Activated CD4-positive, alpha-beta memory T cell treated with anti-CD3 and anti-CD28 coated beads for 36 hours (primary cell): ENCODE measurements at regions of chr2 and their contacts with region 1.

Region 1: DNA sequence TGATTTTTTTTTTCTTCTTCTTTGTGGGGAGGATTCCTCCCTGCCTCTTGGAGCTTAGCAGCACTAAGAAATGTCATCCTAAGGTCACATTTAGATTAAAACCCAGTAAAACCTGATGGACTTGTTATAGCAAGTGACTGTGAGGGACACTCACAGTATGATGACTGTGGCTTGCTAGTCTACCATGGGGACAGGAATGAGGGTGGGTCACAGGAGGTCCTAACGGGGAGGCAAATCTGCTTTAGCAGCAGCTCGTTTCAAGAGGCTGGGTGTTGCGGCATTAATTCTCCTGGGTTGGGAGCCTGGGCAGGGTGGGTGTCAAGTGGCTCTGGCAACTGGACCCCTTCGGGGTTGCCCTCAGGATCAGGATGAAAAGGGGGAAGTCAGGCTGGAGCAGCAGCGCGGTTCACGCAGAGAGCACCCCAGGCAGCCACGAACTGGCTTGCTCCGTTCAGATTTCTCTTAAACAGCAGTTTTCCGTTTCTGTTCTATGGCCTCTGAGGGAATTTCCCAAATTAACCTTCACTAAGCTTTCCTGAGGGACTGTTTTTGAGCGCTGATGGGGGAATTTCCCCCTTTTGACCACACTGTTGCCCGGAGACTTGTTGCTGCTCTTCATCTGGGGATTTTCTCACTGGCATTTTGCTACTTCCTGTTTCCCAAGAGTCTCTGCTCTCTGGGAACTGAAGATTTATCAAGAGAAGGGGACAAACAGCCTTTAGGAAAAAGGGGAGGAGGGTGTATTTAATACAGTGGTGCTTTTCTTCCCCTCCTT is 59.8 kb upstream of the PELI1 start:
- DNase-seq: peak; percentile 69
- H3K4me3 Mint-ChIP-seq: peak overlapping the region; percentile 71
- H3K27ac Mint-ChIP-seq: peak overlapping the region; percentile 87
- H3K4me1 Mint-ChIP-seq: peaks cover 83% of the 10 kb centered on the region
- H3K27me3 Mint-ChIP-seq: no peaks in the 10 kb centered on the region

Region 2: GRCh38 chr2:63679252-63679855 is 524.7 kb before region 1 on chr2:
- CTCF ChIA-PET with region 1: no interaction called
- POLR2A ChIA-PET with region 1: no interaction called
- intact Hi-C with region 1: no loop called
- DNase-seq: no peak
- H3K4me3 Mint-ChIP-seq: no peak overlapping the region
- H3K27ac Mint-ChIP-seq: no peak overlapping the region
- H3K4me1 Mint-ChIP-seq: peaks cover 11% of the 10 kb centered on the region
- H3K27me3 Mint-ChIP-seq: peaks cover 5% of the 10 kb centered on the region

Region 3: DNA sequence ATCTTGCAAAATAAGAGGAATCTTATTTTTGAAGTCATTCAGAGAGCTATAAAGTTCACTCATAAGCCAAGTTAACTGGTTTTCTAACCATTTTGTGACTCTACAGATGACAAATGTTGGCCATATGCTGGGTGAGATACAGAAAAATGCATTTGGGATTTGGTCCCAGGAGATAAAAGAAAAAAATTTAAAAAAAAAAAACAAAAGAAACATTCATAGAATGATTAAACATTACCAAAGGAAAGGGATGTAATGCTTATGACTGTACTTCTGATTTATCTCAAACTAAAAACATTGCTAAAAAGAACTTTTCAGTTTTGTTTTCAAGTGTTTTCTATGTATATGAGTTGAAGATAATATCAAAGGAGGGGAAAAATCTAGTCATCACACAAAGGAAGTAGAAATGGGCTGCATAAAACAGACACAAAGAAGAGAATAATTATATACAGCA is 102.9 kb before region 1 on chr2:
- CTCF ChIA-PET with region 1: no interaction called
- POLR2A ChIA-PET with region 1: no interaction called
- intact Hi-C with region 1: loop called (anchors 2 kb)
- DNase-seq: no peak
- H3K4me3 Mint-ChIP-seq: peak overlapping the region; percentile 49
- H3K27ac Mint-ChIP-seq: peak overlapping the region; percentile 78
- H3K4me1 Mint-ChIP-seq: peaks cover 63% of the 10 kb centered on the region
- H3K27me3 Mint-ChIP-seq: no peaks in the 10 kb centered on the region

Region 4: GRCh38 chr2:64165706-64166105 is 38.3 kb before region 1 on chr2:
- CTCF ChIA-PET with region 1: interaction called, 3 read pairs
- POLR2A ChIA-PET with region 1: no interaction called
- intact Hi-C with region 1: loop called (anchors 2 kb)
- DNase-seq: no peak
- H3K4me3 Mint-ChIP-seq: no peak overlapping the region
- H3K27ac Mint-ChIP-seq: no peak overlapping the region
- H3K4me1 Mint-ChIP-seq: no peaks in the 10 kb centered on the region
- H3K27me3 Mint-ChIP-seq: no peaks in the 10 kb centered on the region

Region 5: GRCh38 chr2:64192125-64192479 is 11.9 kb before region 1 on chr2:
- CTCF ChIA-PET with region 1: no interaction called
- POLR2A ChIA-PET with region 1: no interaction called
- intact Hi-C with region 1: loop called (anchors 1 kb)
- DNase-seq: no peak
- H3K4me3 Mint-ChIP-seq: no peak overlapping the region
- H3K27ac Mint-ChIP-seq: no peak overlapping the region
- H3K4me1 Mint-ChIP-seq: peaks cover 35% of the 10 kb centered on the region
- H3K27me3 Mint-ChIP-seq: no peaks in the 10 kb centered on the region